Sigmoid colon (tissue), 7 donors: ENCODE measurements at regions of chr1 and their contacts with region 1.

Region 1: GRCh38 chr1:58968360-58968952 is 184.6 kb upstream of the JUN start:
- DNase-seq: peak; percentile 94
- H3K4me3 ChIP-seq: no peak overlapping the region
- H3K27ac ChIP-seq: peak overlapping the region; percentile 77 to 83 (median 82)
- H3K4me1 ChIP-seq: peaks cover 0 to 14% (median 9%) of the 10 kb centered on the region in 4 donors
- H3K27me3 ChIP-seq: no peaks in the 10 kb centered on the region
- CTCF ChIP-seq: no peak
- EP300 ChIP-seq: no peak
- POLR2A ChIP-seq: no peak

Region 2: GRCh38 chr1:58816072-58816746 is 152.2 kb before region 1 on chr1:
- intact Hi-C with region 1: loop called (anchors 2 kb)
- DNase-seq: peak; percentile 96
- H3K4me3 ChIP-seq: peak overlapping the region; percentile 42 to 66 (median 56)
- H3K27ac ChIP-seq: peak overlapping the region; percentile 84 to 94 (median 90)
- H3K4me1 ChIP-seq: peaks cover 0 to 24% (median 15%) of the 10 kb centered on the region in 4 donors
- H3K27me3 ChIP-seq: no peaks in the 10 kb centered on the region
- CTCF ChIP-seq: no peak
- EP300 ChIP-seq: no peak
- POLR2A ChIP-seq: peak; percentile 56 to 64

Region 3: GRCh38 chr1:58908561-58909560 is 59.6 kb before region 1 on chr1:
- intact Hi-C with region 1: loop called (anchors 5 kb)
- DNase-seq: no peak
- H3K4me3 ChIP-seq: no peak overlapping the region
- H3K27ac ChIP-seq: no peak overlapping the region
- H3K4me1 ChIP-seq: peaks cover 0 to 14% (median 5%) of the 10 kb centered on the region in 4 donors
- H3K27me3 ChIP-seq: no peaks in the 10 kb centered on the region
- CTCF ChIP-seq: no peak
- EP300 ChIP-seq: no peak
- POLR2A ChIP-seq: no peak

Region 4: DNA sequence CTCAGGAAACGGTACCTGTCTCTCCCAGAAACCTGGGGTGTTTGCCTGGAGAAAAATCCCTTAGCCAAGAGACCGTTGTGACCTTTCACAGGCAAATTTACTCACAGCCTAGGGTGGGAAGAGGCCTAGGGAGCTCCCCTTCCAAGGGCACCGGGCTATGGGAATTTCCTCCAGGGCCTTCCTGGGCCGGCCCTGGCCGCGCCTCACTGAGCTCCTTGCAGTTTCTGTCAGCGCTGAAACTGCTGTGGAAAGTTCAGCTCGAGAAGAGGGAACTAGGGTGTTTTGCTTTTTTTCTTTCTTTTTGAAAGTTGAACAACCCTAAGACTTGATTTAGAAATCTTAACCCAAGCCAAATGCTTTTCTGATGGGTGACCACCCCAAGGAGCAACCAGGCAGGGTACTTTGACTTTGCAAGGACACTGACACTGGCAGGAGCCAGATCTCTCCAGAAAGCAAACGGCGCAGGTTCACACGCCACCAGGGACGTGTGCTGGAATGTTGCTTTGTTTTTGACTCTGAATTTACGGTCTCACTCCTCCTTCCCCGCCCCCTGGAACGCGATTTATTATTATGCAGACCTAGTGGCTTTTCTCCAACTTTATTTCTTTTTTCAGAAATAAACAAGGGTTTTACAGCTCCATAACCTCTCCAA is 44.9 kb after region 1 on chr1:
- intact Hi-C with region 1: loop called (anchors 5 kb)
- DNase-seq: peak; percentile 85
- H3K4me3 ChIP-seq: peak overlapping the region in 3 of 4 donors; percentile 2 to 26 (median 15)
- H3K27ac ChIP-seq: peak overlapping the region; percentile 72 to 95 (median 89)
- H3K4me1 ChIP-seq: peaks cover 0 to 49% (median 35%) of the 10 kb centered on the region in 4 donors
- H3K27me3 ChIP-seq: no peaks in the 10 kb centered on the region
- CTCF ChIP-seq: no peak
- EP300 ChIP-seq: peak in 3 of 4 donors; percentile 12 to 67 (median 30)
- POLR2A ChIP-seq: no peak

Region 5: DNA sequence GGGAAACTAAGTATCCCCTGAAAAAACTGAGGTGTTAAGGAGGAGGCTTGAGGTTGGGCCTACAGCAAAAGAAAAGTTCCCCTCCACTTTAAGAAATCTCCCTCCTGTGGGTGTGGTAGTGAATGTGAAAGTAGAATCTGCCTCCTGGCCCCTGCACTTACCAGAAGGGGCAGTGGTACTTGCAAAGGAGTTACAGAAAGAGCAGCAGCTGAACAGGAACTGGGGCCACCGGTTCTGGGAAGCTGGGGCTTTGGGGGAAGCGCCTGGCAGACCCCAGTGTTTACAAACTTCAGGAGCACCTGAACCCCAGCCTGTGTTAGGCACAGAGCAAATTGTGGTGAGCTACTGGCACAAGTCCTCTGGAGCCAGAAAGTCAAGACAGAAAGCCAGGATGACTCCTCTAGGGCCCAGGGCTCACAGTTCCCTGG is 78.3 kb after region 1 on chr1:
- intact Hi-C with region 1: loop called (anchors 5 kb)
- DNase-seq: no peak
- H3K4me3 ChIP-seq: no peak overlapping the region
- H3K27ac ChIP-seq: peak overlapping the region in 2 of 4 donors; percentile 36 to 39
- H3K4me1 ChIP-seq: peaks cover 0 to 35% (median 29%) of the 10 kb centered on the region in 4 donors
- H3K27me3 ChIP-seq: no peaks in the 10 kb centered on the region
- CTCF ChIP-seq: no peak
- EP300 ChIP-seq: no peak
- POLR2A ChIP-seq: no peak

Region 6: GRCh38 chr1:59163268-59164092 is 195.0 kb after region 1 on chr1:
- intact Hi-C with region 1: no loop called
- DNase-seq: no peak
- H3K4me3 ChIP-seq: no peak overlapping the region
- H3K27ac ChIP-seq: no peak overlapping the region
- H3K4me1 ChIP-seq: no peaks in the 10 kb centered on the region
- H3K27me3 ChIP-seq: no peaks in the 10 kb centered on the region
- CTCF ChIP-seq: no peak
- EP300 ChIP-seq: no peak
- POLR2A ChIP-seq: no peak